ENCODE measurements at regions of chr7 and their contacts with region 1.

Region 1: DNA sequence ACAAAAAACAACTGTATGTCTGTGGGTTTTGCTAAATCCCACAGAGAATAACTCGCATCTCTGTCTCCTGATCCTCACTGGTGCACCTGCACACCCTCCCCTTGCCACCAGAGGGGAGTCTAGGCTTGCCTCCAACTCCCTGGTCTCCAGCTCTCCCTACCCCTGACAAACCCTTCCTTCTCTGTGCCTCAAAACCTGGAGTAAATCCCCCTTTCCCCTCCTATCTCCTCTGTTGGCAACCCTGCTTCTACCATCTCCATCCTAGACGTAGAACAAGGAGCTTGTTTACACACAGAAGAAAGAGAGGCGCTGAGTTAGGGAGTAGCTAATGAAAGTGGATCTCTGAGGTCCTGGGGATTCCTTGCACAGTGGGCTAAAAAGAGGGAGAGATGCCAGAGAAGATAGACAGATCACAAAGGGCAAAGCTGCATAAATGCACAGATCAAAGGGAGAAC is 6.0 kb downstream of the MBLAC1 start:
- DNase-seq: peak; percentile 66 to 84 (median 80)
- ATAC-seq: peak; percentile 81
- H3K4me3 ChIP-seq: no peak overlapping the region
- H3K4me1 ChIP-seq: peaks cover 25% of the 10 kb centered on the region
- CTCF ChIP-seq: peak; percentile 54

Region 2: GRCh38 chr7:99918959-99919813 is 213.5 kb before region 1 on chr7 and contains the start of gene TRIM4:
- intact Hi-C with region 1: no loop called
- DNase-seq: peak; percentile 91 to 95 (median 93)
- ATAC-seq: peak; percentile 99
- H3K4me3 ChIP-seq: peak within 1 kb of the TSS; percentile 88
- H3K4me1 ChIP-seq: peaks cover 25% of the 10 kb centered on the region
- CTCF ChIP-seq: no peak
- total RNA-seq, gene TRIM4: 22.2 to 29.2 (median 25.2) TPM

Region 3: GRCh38 chr7:100215895-100216294 is 83.2 kb after region 1 on chr7:
- intact Hi-C with region 1: loop called (anchors 5 to 10 kb)
- DNase-seq: no peak
- ATAC-seq: no peak
- H3K4me3 ChIP-seq: no peak overlapping the region
- H3K4me1 ChIP-seq: peaks cover 14% of the 10 kb centered on the region
- CTCF ChIP-seq: no peak

Region 4: DNA sequence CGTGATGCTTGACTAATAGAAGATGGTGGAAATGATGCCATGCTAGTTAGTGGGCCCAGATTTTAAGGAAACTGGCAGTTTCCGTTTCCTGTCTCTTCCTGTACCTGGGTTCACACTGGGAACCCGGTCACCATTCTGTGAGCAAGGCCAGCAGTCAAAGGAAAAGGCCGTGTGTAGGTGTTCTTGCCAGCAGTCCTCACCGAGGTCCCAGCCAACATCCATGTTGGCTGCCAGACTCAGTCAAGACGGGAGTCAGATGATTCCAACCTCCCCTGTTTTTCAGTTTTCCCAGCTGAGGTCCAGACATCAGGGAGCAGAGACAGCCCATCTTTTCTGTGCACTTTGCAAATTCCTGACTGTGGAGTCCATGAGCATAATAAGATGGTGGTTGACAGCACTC is 210.0 kb after region 1 on chr7:
- intact Hi-C with region 1: no loop called
- DNase-seq: no peak
- ATAC-seq: no peak
- H3K4me3 ChIP-seq: no peak overlapping the region
- H3K4me1 ChIP-seq: peaks cover 3% of the 10 kb centered on the region
- CTCF ChIP-seq: no peak

Region 5: DNA sequence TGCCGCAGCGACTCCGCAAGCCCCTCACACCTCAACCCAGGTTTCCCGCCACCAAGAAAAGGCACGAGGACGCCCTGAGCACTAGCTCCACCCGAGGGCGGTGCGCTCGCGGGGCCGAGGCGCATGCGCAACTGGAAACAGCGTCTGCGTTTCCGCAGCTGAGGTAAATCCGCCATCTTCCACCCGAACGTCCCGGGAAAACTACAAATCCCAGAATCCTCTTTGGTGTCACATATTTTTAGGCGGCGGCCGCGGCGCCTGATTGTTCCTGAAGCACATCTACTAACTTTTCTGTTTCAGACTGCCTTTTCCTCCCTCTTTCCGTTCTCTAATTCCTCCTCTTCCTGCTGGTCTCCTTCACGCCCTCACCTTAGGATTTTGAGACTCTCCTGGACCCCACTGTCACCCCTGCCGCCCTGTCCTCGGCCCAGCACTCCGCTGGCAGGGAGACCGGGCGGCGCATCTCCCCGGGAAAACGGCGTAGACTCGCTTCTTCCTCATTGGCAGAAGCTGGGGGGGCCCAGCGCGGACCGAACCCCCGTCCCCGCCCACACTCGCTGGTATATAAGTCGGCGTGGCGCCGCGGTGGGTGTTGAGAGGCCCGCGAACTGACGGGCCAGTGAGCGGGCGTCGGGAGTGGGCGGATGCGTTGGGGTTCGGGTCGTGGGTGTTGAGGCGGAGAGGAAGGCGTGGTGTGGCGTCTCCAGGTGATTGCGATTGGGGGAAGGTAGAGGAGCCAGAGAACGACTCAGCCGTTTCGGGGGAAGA is 295.7 kb after region 1 on chr7 and contains the start of gene ZCWPW1:
- intact Hi-C with region 1: loop called in 1 of 2 experiments (anchors 5 kb)
- DNase-seq: peak; percentile 96 to 99 (median 98)
- ATAC-seq: peak; percentile 74
- H3K4me3 ChIP-seq: peak within 1 kb of the TSS; percentile 75
- H3K4me1 ChIP-seq: peaks cover 26% of the 10 kb centered on the region
- CTCF ChIP-seq: no peak
- total RNA-seq, gene ZCWPW1: 1.8 to 6.1 (median 2.3) TPM